CD4-positive, alpha-beta T cell (primary cell): ENCODE measurements at regions of chr2 and their contacts with region 1.

Region 1: DNA sequence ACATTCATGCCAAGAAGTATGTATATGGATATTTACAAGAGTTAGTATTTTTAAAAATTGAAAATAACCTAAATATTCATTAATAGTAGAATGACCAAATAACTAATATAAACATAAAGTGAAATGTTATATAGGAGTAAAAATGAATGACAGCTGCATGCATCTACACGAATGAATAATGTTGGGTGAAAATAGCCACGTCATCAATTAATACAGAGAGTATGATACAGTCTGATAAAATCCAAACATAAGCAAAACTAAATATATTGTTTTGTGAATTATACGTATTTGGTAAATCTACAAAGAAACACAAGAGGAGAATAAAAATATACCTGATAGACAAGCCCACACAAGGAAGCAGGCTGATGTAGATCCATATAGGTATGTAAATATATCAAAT is 24.5 kb downstream of the ZC3H8 start:
- DNase-seq: no peak
- ATAC-seq: no peak
- H3K4me3 ChIP-seq: no peak overlapping the region
- H3K4me3 Mint-ChIP-seq: no peak overlapping the region
- H3K27ac ChIP-seq: no peak overlapping the region
- H3K27ac Mint-ChIP-seq: no peak overlapping the region
- H3K4me1 ChIP-seq: no peaks in the 10 kb centered on the region
- H3K4me1 Mint-ChIP-seq: peaks cover 7% of the 10 kb centered on the region
- H3K27me3 ChIP-seq: no peaks in the 10 kb centered on the region
- H3K27me3 Mint-ChIP-seq: no peaks in the 10 kb centered on the region
- CTCF ChIP-seq: no peak

Region 2: DNA sequence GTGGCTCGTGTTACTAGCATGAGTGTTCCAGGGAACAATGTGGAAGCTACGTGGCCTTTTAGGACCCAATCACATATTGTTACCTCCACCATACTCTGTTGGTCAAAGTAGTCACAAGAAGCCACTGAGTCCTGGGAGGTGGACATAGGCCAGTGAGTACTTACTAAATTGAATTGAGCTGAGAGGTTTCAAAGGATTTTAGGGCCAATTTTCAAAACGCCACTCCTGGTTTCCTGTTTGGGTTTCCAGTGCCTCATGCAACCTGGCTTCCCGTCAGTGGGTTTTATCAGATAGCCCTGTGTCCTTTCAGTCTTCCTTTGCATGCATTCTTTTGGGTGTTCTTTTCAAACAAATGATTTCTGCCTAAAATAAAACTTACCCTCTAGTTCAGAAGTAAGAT is 35.9 kb before region 1 on chr2:
- CTCF ChIA-PET with region 1: no interaction called
- POLR2A ChIA-PET with region 1: no interaction called
- intact Hi-C with region 1: loop called in 1 of 2 experiments (anchors 5 kb)
- DNase-seq: peak in 1 of 14 experiments; percentile 34
- ATAC-seq: no peak
- H3K4me3 ChIP-seq: no peak overlapping the region
- H3K4me3 Mint-ChIP-seq: no peak overlapping the region
- H3K27ac ChIP-seq: no peak overlapping the region
- H3K27ac Mint-ChIP-seq: peak overlapping the region; percentile 43
- H3K4me1 ChIP-seq: peaks cover 38% of the 10 kb centered on the region
- H3K4me1 Mint-ChIP-seq: peaks cover 64% of the 10 kb centered on the region
- H3K27me3 ChIP-seq: no peaks in the 10 kb centered on the region
- H3K27me3 Mint-ChIP-seq: no peaks in the 10 kb centered on the region
- CTCF ChIP-seq: no peak